ENCODE measurements at regions of chr11 and their contacts with region 1.

Region 1: DNA sequence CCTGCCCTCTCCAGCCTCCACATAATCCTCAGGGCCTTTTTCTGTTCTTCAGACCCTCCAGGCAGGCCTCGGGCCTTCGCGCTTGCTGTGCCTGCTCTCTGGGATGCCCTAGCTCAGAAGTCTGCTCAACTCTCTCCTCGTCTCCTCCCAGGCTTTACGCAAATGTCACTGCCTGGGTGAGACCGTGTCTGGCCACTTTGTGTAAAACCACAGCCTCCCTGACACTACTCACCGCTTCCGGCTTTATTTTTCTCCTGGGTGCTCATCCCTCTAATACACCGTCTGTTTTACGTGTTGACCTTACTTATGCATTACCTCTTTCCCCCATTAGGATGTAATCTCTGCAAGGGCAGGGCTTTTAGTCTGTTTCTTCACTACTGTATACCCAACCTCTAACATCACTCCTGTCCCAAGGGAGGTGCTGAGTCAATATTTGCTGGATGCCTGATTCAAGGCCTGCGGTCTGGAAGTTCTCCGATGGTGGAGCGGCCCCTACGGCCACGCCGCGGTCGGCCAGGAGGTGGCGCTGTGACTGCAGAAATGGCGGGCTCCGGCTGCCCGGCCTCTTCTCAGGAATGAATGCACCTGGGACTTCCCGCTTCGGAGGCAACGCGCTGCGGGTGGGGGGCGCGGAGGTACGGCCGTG is 58.2 kb upstream of the THY1 start:
- DNase-seq: peak; percentile 82
- H3K4me3 Mint-ChIP-seq: no peak overlapping the region
- H3K27ac Mint-ChIP-seq: no peak overlapping the region
- H3K4me1 Mint-ChIP-seq: no peaks in the 10 kb centered on the region
- H3K27me3 Mint-ChIP-seq: peaks cover 13% of the 10 kb centered on the region

Region 2: GRCh38 chr11:119018074-119018938 is 462.8 kb before region 1 on chr11 and contains the starts of genes RPS25 and TRAPPC4:
- CTCF ChIA-PET with region 1: no interaction called
- POLR2A ChIA-PET with region 1: no interaction called
- intact Hi-C with region 1: no loop called
- DNase-seq: peak; percentile 98
- H3K4me3 Mint-ChIP-seq: peak within 1 kb of the TSS; percentile 99
- H3K27ac Mint-ChIP-seq: peak within 1 kb of the TSS; percentile 99
- H3K4me1 Mint-ChIP-seq: peaks cover 54% of the 10 kb centered on the region
- H3K27me3 Mint-ChIP-seq: no peaks in the 10 kb centered on the region
- total RNA-seq, gene RPS25: 1,852 to 1,922 TPM
- total RNA-seq, gene TRAPPC4: 86.4 to 87.8 TPM

Region 3: DNA sequence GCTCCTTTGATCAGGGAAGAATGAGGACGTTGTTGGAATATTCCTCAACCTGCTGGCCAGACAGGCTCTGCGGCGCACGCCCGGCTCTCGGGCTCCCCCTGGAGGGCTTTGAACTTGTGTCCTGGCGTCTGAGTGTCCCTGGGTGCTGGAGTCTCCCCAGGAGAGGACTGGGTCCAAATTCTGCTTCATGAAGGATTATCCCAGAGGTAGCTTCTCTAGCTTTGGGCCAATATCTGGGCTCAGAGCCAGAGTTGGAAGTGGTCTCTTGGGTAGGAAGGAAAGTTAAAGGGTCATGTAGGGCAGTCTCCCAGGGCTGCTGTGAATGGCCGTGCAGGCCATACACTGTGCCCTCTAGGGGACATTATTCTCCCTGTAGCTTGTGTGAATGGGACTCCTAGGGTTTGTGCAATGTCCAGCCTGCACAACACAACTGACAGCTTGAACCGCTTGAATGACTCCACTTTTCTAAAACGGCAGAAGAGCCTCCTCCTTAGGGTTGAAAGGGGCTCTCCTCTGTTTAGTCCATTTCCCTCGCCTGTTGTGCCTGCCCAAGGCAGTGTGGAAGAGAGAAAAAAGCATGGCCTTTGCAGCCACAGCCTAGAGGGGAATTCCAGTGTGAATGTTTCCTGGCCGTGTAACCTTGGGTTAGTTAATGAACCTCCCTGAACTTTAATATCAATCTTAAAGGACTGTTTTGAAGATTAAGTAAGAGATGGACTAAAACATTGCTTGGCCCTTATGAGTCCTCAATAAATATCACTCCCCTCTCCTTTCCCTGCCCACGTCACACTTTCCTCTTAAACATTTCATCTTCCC is 53.0 kb after region 1 on chr11:
- CTCF ChIA-PET with region 1: interaction called, 36 read pairs
- POLR2A ChIA-PET with region 1: no interaction called
- intact Hi-C with region 1: loop called (anchors 1 kb)
- DNase-seq: peak; percentile 71
- H3K4me3 Mint-ChIP-seq: no peak overlapping the region
- H3K27ac Mint-ChIP-seq: no peak overlapping the region
- H3K4me1 Mint-ChIP-seq: no peaks in the 10 kb centered on the region
- H3K27me3 Mint-ChIP-seq: peaks cover 15% of the 10 kb centered on the region

Region 4: DNA sequence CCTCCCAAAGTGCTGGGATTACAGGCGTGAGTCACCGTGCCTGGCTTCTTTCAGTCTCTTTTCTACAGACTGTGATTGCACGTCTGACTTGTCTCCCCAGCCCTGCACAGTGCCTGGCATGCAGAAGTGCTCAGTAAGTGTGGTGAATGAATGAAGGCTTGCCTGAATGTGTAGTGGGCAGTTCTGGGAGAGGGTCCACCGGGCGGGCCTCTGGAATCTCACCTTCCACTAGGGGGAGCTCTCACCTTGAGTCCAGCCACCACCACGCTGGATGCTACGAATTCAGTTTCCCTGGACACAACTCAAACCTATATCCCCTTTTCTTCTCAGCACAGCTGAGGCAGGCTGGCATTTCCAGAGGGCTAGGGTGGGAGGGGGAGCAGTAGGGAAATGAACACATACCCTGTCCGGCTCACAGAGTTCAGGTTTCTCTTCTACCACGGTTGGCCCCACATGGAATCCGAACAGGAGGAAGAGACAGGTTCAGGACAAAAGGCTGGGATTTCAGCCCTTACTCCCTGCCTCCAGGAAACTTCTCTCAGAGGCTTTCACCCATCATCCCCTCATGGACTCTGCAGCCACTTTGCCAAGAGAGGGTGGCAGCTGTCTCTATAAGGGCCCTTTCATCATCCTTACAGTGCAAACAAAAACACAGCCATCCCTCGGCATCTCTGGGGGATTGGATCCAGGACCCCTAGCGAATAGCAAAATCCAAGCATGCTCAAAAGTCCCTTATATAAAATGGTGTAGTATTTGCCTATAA is 161.0 kb after region 1 on chr11:
- CTCF ChIA-PET with region 1: no interaction called
- POLR2A ChIA-PET with region 1: no interaction called
- intact Hi-C with region 1: loop called (anchors 5 kb)
- DNase-seq: peak; percentile 13
- H3K4me3 Mint-ChIP-seq: no peak overlapping the region
- H3K27ac Mint-ChIP-seq: no peak overlapping the region
- H3K4me1 Mint-ChIP-seq: no peaks in the 10 kb centered on the region
- H3K27me3 Mint-ChIP-seq: peaks cover 2% of the 10 kb centered on the region

Region 5: GRCh38 chr11:120108154-120108865 is 627.2 kb after region 1 on chr11:
- CTCF ChIA-PET with region 1: interaction called, 5 read pairs
- POLR2A ChIA-PET with region 1: no interaction called
- intact Hi-C with region 1: loop called (anchors 10 kb)
- DNase-seq: peak; percentile 72
- H3K4me3 Mint-ChIP-seq: no peak overlapping the region
- H3K27ac Mint-ChIP-seq: no peak overlapping the region
- H3K4me1 Mint-ChIP-seq: no peaks in the 10 kb centered on the region
- H3K27me3 Mint-ChIP-seq: peaks cover 8% of the 10 kb centered on the region

Measured in activated CD4-positive, alpha-beta memory T cell treated with anti-CD3 and anti-CD28 coated beads for 36 hours (primary cell).